Right ventricle myocardium inferior (tissue), 1 donor: ENCODE measurements at regions of chr20 and their contacts with region 1.

Region 1: GRCh38 chr20:2172305-2173175 is 70.9 kb downstream of the STK35 start:
- DNase-seq: peak; percentile 80
- ATAC-seq: peak; percentile 65

Region 2: GRCh38 chr20:1764136-1765033 is 408.2 kb before region 1 on chr20:
- intact Hi-C with region 1: loop called (anchors 2 kb)
- DNase-seq: peak; percentile 82
- ATAC-seq: peak; percentile 91

Region 3: GRCh38 chr20:1802385-1803060 is 370.0 kb before region 1 on chr20:
- intact Hi-C with region 1: loop called (anchors 10 kb)
- DNase-seq: peak; percentile 91
- ATAC-seq: peak; percentile 80

Region 4: DNA sequence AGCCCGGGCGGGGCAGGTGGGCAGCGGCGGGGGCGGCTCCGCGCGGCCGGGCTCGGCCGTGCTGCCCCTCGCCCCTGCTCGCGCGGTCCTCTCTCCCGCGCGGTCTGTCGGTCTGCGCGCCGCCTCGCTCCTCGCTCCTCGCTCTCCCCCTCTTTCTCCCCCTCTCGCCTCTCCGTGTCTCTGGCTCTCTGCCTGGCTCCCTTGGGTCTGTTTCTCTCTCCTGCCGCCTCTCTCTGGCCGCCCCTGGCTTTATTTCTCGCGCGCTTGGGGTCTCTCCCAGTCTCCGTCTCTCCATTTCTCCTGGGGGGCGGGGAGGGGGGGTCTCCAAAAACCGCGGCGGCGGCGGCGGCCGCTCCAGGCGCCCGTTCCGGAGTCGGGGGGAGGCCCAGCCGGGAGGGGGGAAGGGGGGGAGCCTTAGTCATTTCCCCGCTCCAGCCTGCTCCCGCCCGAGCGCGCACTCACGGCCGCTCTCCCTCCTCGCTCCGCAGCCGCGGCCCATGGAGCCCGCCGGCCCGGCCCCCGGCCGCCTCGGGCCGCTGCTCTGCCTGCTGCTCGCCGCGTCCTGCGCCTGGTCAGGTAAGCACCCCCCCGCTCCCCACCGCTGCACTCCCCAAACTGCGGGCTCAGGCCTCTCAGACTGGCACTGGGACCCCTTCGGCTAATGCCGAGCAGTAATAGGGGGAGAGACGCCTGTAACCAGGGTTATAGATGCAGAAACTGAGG is 277.4 kb before region 1 on chr20 and contains the start of gene SIRPA:
- intact Hi-C with region 1: loop called (anchors 10 kb)
- DNase-seq: peak; percentile 83
- ATAC-seq: peak; percentile 61
- total RNA-seq, gene SIRPA: 20.9 TPM

Region 5: DNA sequence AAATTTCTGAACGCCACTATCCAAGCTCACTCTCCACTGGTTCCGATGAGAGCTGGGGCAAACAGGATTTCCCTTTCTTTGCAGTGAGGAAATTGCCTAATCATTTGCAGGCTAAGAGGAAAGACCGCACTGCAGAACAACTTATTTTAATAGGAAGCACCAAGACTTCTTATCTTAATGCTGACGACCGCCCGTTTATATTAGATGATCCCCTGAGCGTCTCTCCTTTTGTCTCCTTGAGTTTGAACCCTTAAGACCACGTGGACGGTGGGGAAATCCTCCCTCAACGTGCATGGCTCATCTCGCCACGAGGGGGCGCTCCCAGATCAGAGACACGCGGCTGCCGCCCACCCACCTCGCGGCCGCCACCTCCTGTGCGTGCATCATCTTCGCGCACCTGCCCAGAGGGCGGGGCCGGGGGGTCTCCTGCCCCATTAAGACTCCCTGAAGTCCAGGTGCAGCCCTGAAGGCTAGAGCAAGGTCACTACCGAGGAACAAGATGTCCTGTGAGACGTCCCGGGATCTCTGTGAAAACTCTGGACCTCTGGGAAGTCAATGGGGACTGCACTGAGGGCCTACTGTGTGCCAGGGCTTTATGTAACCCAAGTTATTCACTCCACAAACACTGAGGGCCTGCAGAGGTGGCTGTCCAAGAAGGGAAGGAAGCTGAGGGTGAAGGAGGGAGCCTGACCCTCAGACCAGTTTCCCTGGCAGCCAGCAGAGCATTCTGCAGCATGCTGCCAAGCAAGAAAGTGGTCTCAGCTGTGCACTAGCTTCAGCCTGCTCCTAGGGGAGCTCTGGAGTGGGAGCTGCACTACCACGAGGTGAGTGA is 206.8 kb before region 1 on chr20:
- intact Hi-C with region 1: loop called (anchors 2 kb)
- DNase-seq: peak; percentile 90
- ATAC-seq: peak; percentile 82

Region 6: GRCh38 chr20:2086177-2086979 is 86.2 kb before region 1 on chr20:
- intact Hi-C with region 1: loop called (anchors 1 kb)
- DNase-seq: no peak
- ATAC-seq: peak; percentile 50